ENCODE measurements at regions of chr3 and their contacts with region 1.

Region 1: DNA sequence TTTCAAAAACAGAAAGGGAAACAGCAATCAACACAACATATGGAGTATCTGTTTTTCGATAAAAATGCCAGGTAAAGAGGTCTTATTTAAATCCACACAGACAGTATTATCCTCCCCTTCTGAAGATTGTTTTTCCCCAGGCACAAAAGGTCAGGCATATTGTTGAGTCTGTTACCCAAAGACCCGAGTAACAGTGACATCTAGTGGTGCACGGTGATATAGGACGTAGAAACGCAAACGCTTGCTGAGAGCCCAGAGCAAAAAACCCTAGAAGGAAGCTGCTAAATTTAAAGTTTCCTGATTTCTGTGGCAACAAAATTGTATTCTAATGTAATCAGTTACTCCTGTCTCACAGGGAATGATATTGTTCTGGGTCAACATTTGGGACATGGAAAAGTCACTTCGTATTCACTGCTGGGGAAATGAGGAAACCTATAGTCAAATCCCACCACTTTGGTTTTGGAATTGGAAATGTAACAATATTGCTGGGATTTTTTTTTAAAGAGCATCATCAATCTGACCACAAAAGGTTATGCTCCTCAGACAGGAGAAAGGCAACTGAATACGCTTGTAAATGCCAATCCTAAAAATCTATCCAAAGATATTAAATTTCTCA is 312.7 kb upstream of the CCDC54 start:
- DNase-seq: peak; percentile 43
- H3K4me3 ChIP-seq: no peak overlapping the region
- H3K27ac ChIP-seq: no peak overlapping the region
- H3K27me3 ChIP-seq: no peaks in the 10 kb centered on the region
- CTCF ChIP-seq: peak; percentile 91

Region 2: GRCh38 chr3:106617276-106617675 is 447.3 kb before region 1 on chr3:
- CTCF ChIA-PET with region 1: interaction called, 12 read pairs
- POLR2A ChIA-PET with region 1: no interaction called
- DNase-seq: no peak
- H3K4me3 ChIP-seq: no peak overlapping the region
- H3K27ac ChIP-seq: no peak overlapping the region
- H3K27me3 ChIP-seq: no peaks in the 10 kb centered on the region
- CTCF ChIP-seq: no peak

Region 3: GRCh38 chr3:106862067-106862466 is 202.5 kb before region 1 on chr3:
- CTCF ChIA-PET with region 1: interaction called, 12 read pairs
- POLR2A ChIA-PET with region 1: no interaction called
- DNase-seq: no peak
- H3K4me3 ChIP-seq: no peak overlapping the region
- H3K27ac ChIP-seq: no peak overlapping the region
- H3K27me3 ChIP-seq: no peaks in the 10 kb centered on the region
- CTCF ChIP-seq: peak; percentile 50

Region 4: GRCh38 chr3:106920609-106921008 is 143.9 kb before region 1 on chr3:
- CTCF ChIA-PET with region 1: no interaction called
- POLR2A ChIA-PET with region 1: no interaction called
- DNase-seq: no peak
- H3K4me3 ChIP-seq: no peak overlapping the region
- H3K27ac ChIP-seq: no peak overlapping the region
- H3K27me3 ChIP-seq: no peaks in the 10 kb centered on the region
- CTCF ChIP-seq: no peak

Region 5: DNA sequence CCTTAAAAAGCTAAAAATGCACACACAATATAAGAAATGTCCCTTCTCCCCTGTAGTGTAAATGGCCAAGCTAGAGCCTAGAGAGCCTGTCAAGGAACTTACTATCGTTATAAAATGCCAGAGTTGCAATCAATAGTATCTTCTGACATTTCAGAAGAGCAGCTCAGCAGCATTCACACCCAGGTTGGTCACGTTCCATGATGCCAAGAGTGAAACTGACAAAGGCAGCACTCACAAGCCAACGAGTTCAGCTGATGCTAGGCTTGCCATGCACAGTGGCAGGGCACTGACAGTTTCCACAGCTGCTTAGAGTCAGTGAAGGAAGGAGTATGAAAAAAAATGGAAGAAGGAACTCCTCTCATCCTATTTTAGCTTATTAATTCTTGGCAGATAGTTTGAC is 18.8 kb before region 1 on chr3:
- CTCF ChIA-PET with region 1: no interaction called
- POLR2A ChIA-PET with region 1: no interaction called
- DNase-seq: no peak
- H3K4me3 ChIP-seq: no peak overlapping the region
- H3K27ac ChIP-seq: no peak overlapping the region
- H3K27me3 ChIP-seq: no peaks in the 10 kb centered on the region
- CTCF ChIP-seq: no peak

Region 6: GRCh38 chr3:107082527-107082926 is 18.0 kb after region 1 on chr3:
- CTCF ChIA-PET with region 1: interaction called, 15 read pairs
- POLR2A ChIA-PET with region 1: no interaction called
- DNase-seq: no peak
- H3K4me3 ChIP-seq: no peak overlapping the region
- H3K27ac ChIP-seq: no peak overlapping the region
- H3K27me3 ChIP-seq: no peaks in the 10 kb centered on the region
- CTCF ChIP-seq: no peak

Region 7: GRCh38 chr3:107184375-107184774 is 119.8 kb after region 1 on chr3:
- CTCF ChIA-PET with region 1: no interaction called
- POLR2A ChIA-PET with region 1: no interaction called
- DNase-seq: no peak
- H3K4me3 ChIP-seq: no peak overlapping the region
- H3K27ac ChIP-seq: no peak overlapping the region
- H3K27me3 ChIP-seq: no peaks in the 10 kb centered on the region
- CTCF ChIP-seq: no peak

Measured in AG04450 (cell line).